BJ (cell line): ENCODE measurements at regions of chr17 and their contacts with region 1.

Region 1: DNA sequence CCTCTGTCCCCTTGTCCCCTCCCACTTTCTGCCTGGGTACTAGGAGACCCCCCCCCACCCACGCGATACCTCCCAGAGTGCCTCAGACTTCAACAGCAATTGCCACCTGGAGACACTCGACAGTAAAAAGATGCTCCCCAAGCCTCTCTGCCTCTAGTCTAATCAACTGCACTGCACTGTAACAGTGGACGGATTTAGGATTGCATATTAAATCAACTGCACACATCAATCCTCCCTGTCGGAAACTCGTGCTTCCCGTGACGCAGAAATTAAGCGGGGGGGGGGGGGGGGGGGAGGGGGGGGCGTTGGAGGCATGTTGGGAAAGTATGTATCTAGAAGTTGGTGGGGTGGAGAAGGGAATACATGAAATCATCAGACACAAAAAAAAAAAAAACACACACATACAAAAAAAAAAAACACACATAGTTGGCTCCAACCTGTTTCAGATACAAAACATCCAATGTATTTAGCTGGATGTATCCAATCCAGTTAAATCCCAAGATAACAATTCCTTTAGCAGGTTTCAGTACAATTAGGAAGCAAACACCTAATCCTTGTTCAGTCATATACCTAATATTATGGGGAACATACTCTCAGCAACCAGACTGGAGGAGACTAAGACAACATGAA is 29.7 kb downstream of the FAM222B start:
- DNase-seq: no peak
- H3K4me3 ChIP-seq: peak overlapping the region; percentile 99
- H3K27me3 ChIP-seq: no peaks in the 10 kb centered on the region
- CTCF ChIP-seq: no peak

Region 2: DNA sequence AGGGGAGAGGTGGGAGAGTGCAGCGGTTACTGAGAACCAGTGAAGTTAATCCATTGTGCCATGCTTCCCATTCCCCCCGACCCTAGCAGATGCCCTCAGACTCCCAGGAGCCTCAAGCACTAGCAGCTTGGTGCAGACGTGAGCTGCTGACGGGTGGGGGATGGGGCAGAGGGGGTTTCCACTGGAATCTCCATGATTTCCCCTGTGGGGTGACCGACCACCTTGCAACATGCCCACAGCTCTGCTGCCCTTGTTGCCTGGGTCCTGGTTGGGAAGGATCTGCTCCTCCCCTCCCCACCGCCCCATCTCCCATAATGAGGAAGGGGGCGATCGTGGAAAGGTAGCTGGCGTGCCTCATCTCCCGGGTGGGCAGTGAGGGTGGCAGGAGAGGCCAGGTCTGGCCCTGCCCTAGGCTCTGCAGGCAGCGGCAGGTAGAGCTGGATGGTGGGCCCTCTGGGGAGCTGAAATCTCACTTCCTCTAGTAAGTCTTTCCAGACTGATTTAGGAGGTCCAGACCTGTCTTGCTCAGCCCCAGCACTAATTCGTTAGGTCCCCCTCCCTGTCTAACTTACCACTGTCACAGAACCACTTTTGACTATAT is 75.1 kb after region 1 on chr17:
- CTCF ChIA-PET with region 1: no interaction called
- POLR2A ChIA-PET with region 1: interaction called, 13 read pairs
- DNase-seq: no peak
- H3K4me3 ChIP-seq: no peak overlapping the region
- H3K27me3 ChIP-seq: no peaks in the 10 kb centered on the region
- CTCF ChIP-seq: no peak